Caco-2 (cell line): ENCODE measurements at regions of chr17 and their contacts with region 1.

Region 1: GRCh38 chr17:36534840-36535668 is at the starts of genes MYO19 and PIGW:
- DNase-seq: peak; percentile 95 to 96
- H3K4me3 ChIP-seq: peak within 1 kb of the TSS; percentile 79
- H3K4me3 Mint-ChIP-seq: peak within 1 kb of the TSS; percentile 97
- H3K27ac Mint-ChIP-seq: peak within 1 kb of the TSS; percentile 99
- H3K4me1 ChIP-seq: peaks cover 10% of the 10 kb centered on the region
- H3K4me1 Mint-ChIP-seq: peaks cover 13% of the 10 kb centered on the region
- H3K27me3 ChIP-seq: no peaks in the 10 kb centered on the region
- H3K27me3 Mint-ChIP-seq: no peaks in the 10 kb centered on the region
- CTCF ChIP-seq: peak in 1 of 2 experiments; percentile 17
- total RNA-seq, gene MYO19: 153 and 177 TPM in 2 replicates
- total RNA-seq, gene PIGW: 30.9 and 33.6 TPM in 2 replicates

Region 2: DNA sequence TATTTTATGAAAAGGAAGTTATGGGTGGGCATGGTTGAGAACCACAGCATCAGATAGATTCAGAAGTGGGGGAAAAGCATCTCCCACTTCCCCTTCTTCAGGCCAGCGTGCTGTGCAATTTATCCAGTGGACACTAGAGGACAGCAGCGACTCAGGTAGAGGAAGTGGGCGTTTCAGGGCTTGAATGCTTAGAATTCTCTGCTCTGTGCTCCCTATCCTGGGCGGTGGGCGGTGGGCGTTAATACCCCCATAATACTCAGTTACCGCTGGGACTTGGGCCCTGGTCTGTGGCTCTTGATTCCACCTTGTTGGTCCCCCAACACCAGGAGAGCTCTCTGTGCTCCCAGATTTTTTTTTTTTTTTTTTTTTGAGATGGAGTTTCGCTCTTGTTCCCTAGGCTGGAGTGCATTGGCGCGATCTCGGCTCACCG is 587.9 kb before region 1 on chr17:
- CTCF ChIA-PET with region 1: no interaction called
- POLR2A ChIA-PET with region 1: interaction called, 12 read pairs
- intact Hi-C with region 1: no loop called
- DNase-seq: peak; percentile 73 to 76
- H3K4me3 ChIP-seq: peak overlapping the region; percentile 25
- H3K4me3 Mint-ChIP-seq: peak overlapping the region; percentile 60
- H3K27ac Mint-ChIP-seq: no peak overlapping the region
- H3K4me1 ChIP-seq: peaks cover 13% of the 10 kb centered on the region
- H3K4me1 Mint-ChIP-seq: no peaks in the 10 kb centered on the region
- H3K27me3 ChIP-seq: no peaks in the 10 kb centered on the region
- H3K27me3 Mint-ChIP-seq: no peaks in the 10 kb centered on the region
- CTCF ChIP-seq: peak; percentile 90 to 93

Region 3: DNA sequence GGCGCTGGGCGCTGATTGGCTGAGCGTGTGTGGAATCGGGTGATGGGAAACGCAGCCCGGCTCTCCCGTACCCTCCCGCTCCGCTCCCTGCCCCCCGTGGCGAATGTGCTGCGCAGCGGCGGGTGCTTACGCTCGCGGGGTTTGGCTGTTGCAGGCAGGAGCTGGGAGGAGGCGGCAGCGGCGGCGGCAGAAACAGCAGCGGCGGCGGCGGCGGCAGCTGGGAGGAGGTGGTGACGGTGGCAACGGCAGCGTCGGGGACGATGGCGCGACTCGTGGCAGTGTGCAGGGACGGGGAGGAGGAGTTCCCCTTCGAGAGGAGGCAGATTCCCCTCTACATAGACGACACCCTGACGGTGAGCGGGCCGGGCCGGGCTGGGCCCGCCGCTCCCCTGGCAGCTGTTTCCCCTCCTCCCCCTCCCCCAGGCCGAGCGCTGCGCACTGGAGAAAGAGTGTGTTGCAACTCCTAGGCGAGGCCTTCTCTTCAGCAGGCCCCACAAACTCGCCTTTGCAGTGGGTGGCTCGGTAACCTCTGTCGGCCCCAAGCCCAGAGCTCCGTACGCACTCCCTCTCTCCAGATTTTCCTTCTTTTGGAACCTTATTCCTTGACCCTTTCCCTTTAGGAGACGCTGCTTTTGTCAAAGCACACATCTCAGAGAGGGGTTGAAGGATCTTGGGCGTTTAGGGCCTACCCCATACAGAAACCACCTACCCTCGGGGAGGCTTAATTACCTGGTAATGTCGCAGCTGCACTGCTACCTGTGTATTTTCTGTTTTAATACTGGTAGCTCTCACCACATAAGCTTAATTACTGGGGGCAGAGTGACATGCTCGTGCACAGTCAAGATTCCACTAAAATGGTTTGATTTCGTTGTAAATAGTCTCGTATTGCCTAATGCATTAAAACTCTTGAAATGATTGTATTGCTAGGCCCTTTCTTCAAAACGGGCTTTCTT is 10.7 kb after region 1 on chr17:
- CTCF ChIA-PET with region 1: interaction called, 16 read pairs
- POLR2A ChIA-PET with region 1: interaction called, 19 read pairs
- intact Hi-C with region 1: loop called (anchors 1 kb)
- DNase-seq: peak; percentile 99
- H3K4me3 ChIP-seq: peak overlapping the region; percentile 51
- H3K4me3 Mint-ChIP-seq: peak overlapping the region; percentile 92
- H3K27ac Mint-ChIP-seq: peak overlapping the region; percentile 97
- H3K4me1 ChIP-seq: peaks cover 23% of the 10 kb centered on the region
- H3K4me1 Mint-ChIP-seq: peaks cover 13% of the 10 kb centered on the region
- H3K27me3 ChIP-seq: no peaks in the 10 kb centered on the region
- H3K27me3 Mint-ChIP-seq: no peaks in the 10 kb centered on the region
- CTCF ChIP-seq: no peak

Region 4: GRCh38 chr17:36566081-36566480 is 31.0 kb after region 1 on chr17:
- CTCF ChIA-PET with region 1: no interaction called
- POLR2A ChIA-PET with region 1: no interaction called
- intact Hi-C with region 1: no loop called
- DNase-seq: no peak
- H3K4me3 ChIP-seq: no peak overlapping the region
- H3K4me3 Mint-ChIP-seq: no peak overlapping the region
- H3K27ac Mint-ChIP-seq: no peak overlapping the region
- H3K4me1 ChIP-seq: no peaks in the 10 kb centered on the region
- H3K4me1 Mint-ChIP-seq: no peaks in the 10 kb centered on the region
- H3K27me3 ChIP-seq: no peaks in the 10 kb centered on the region
- H3K27me3 Mint-ChIP-seq: no peaks in the 10 kb centered on the region
- CTCF ChIP-seq: no peak

Region 5: GRCh38 chr17:36601303-36602029 is 66.4 kb after region 1 on chr17 and contains the start of gene MRM1:
- CTCF ChIA-PET with region 1: interaction called, 4 read pairs
- POLR2A ChIA-PET with region 1: interaction called, 4 read pairs
- intact Hi-C with region 1: loop called (anchors 2 kb)
- DNase-seq: peak; percentile 95 to 97
- H3K4me3 ChIP-seq: peak within 1 kb of the TSS; percentile 66
- H3K4me3 Mint-ChIP-seq: peak within 1 kb of the TSS; percentile 88
- H3K27ac Mint-ChIP-seq: peak within 1 kb of the TSS; percentile 97
- H3K4me1 ChIP-seq: peaks cover 10% of the 10 kb centered on the region
- H3K4me1 Mint-ChIP-seq: peaks cover 27% of the 10 kb centered on the region
- H3K27me3 ChIP-seq: no peaks in the 10 kb centered on the region
- H3K27me3 Mint-ChIP-seq: no peaks in the 10 kb centered on the region
- CTCF ChIP-seq: peak in 1 of 2 experiments; percentile 36
- total RNA-seq, gene MRM1: 9.3 and 13.5 TPM in 2 replicates